Endothelial cell of umbilical vein (primary cell): ENCODE measurements at regions of chr11 and their contacts with region 1.

Region 1: GRCh38 chr11:76131671-76132631 is 74.4 kb downstream of the WNT11 start:
- DNase-seq: peak; percentile 56
- H3K4me3 ChIP-seq: no peak overlapping the region
- H3K27ac ChIP-seq: no peak overlapping the region
- H3K4me1 ChIP-seq: peaks cover 2% of the 10 kb centered on the region
- H3K27me3 ChIP-seq: no peaks in the 10 kb centered on the region
- CTCF ChIP-seq: no peak
- POLR2A ChIP-seq: no peak

Region 2: DNA sequence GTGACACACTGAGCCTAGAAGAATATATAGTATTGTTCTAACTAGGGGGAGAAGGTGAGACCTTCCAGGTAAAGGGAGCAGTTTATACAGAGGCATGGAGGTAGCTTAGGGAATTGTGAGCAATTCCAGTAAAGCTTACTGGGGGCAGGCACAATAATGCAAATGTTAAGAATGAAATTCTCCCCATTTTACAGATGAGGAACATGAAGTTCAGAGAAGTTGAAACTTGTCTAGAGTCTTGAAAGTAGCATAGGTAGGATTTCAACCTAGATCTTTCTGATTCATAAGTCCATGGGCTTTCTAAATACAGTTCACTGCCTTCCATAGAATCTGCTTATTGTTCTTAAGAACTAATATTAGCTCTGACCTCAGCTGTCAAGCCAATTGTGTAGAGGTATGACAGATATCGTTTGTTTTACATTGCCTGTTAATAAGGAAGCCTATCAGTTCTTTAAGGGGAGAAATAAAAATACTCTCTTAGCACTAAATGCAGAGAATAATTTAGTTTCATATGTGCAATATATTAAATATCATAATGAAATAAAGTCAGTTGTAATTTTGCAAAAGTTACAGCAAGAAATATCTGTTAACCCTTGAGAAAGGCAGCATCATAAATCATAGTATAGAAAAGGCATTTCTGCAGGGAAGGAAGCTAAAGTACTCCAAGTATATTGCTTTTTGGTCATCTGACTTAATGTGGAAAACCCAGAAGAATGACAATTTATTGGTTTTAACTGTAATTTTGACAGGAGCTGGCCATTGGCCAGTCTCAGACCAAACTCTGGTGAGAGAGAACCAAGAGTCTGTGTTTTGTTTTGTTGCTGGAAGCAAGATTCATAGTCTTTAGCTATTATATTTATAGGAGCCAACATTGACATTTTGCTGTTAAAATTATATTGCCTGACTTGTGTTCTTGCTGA is 135.2 kb before region 1 on chr11:
- CTCF ChIA-PET with region 1: no interaction called
- POLR2A ChIA-PET with region 1: no interaction called
- dilution Hi-C with region 1: no loop called
- intact Hi-C with region 1: no loop called
- DNase-seq: peak; percentile 64
- H3K4me3 ChIP-seq: no peak overlapping the region
- H3K27ac ChIP-seq: no peak overlapping the region
- H3K4me1 ChIP-seq: no peaks in the 10 kb centered on the region
- H3K27me3 ChIP-seq: no peaks in the 10 kb centered on the region
- CTCF ChIP-seq: no peak
- POLR2A ChIP-seq: no peak

Region 3: DNA sequence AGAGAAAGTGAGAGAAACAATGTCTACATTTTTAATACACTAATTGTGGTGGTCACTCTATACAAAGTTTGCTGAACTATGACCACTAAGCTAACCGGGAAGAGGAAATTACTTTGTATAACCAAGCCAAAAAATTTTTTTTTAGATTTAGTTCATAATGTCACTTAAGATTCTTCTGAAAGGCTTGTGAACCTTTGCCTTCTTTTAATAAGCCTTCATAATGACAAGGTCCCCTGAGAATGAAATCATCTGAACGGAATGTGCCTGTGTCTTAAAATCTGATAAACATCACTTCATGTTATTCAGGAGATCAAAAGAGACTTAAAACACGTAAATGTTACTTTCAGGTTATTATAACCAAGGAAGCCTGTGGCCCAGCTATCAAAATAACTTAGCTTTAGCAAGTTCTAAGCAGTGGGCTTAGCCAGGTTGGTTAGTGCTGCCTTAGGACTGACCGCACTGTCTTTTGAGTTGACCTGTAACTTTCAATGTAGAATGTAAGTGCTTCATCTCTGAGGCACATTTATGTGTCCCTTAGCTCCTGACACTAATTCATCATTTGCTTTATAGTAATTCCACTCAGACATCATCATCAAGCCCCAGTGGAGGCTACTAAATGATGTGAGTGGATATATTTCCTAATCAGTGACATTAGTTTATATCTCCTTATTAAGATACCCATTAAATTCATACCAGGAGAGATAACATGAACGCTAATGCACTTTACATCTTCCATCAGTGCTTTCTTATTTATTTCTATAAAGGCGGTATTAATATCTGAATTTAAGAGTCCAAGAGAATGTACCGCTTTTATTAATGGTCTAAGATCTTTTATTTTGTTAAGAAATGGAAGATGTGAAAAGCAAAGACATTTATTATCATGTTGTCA is 48.1 kb before region 1 on chr11:
- CTCF ChIA-PET with region 1: no interaction called
- POLR2A ChIA-PET with region 1: no interaction called
- dilution Hi-C with region 1: no loop called
- intact Hi-C with region 1: no loop called
- DNase-seq: peak; percentile 40
- H3K4me3 ChIP-seq: no peak overlapping the region
- H3K27ac ChIP-seq: peak overlapping the region; percentile 40
- H3K4me1 ChIP-seq: peaks cover 17% of the 10 kb centered on the region
- H3K27me3 ChIP-seq: no peaks in the 10 kb centered on the region
- CTCF ChIP-seq: no peak
- POLR2A ChIP-seq: no peak

Region 4: GRCh38 chr11:76120513-76121101 is 11.3 kb before region 1 on chr11:
- CTCF ChIA-PET with region 1: interaction called, 18 read pairs
- POLR2A ChIA-PET with region 1: no interaction called
- dilution Hi-C with region 1: no loop called
- intact Hi-C with region 1: no loop called
- DNase-seq: peak; percentile 69
- H3K4me3 ChIP-seq: peak overlapping the region in 1 of 3 experiments; percentile 23
- H3K27ac ChIP-seq: peak overlapping the region; percentile 38
- H3K4me1 ChIP-seq: peaks cover 25% of the 10 kb centered on the region
- H3K27me3 ChIP-seq: no peaks in the 10 kb centered on the region
- CTCF ChIP-seq: no peak
- POLR2A ChIP-seq: no peak